Astrocyte of the cerebellum (primary cell): ENCODE measurements at regions of chr1 and their contacts with region 1.

Region 1: GRCh38 chr1:4880601-4881000 is 226.2 kb downstream of the AJAP1 start:
- DNase-seq: no peak
- H3K4me3 ChIP-seq: no peak overlapping the region
- CTCF ChIP-seq: no peak

Region 2: GRCh38 chr1:4836574-4836973 is 44.0 kb before region 1 on chr1:
- in situ Hi-C with region 1: loop called (anchors 5 kb)
- DNase-seq: no peak
- H3K4me3 ChIP-seq: no peak overlapping the region
- CTCF ChIP-seq: no peak

Region 3: DNA sequence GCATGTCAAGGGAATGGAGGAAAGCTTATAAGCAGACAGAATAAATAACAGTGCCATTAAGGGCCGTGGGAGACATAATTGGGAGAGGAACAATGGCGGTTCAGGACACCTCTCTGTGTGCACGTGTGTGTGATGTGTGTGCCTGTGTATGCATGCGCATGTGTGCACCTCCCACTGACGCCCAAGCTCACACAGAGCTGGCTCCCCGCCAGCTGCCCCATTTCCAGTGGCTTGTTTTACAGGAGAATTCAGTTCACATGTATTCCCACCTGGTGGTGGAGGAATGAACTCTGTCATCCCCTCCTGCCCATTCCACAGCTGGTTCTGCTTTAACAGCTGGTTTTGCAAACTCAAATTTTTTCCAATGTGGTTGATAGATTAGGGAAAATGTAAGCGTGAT is 36.0 kb after region 1 on chr1:
- in situ Hi-C with region 1: no loop called
- DNase-seq: no peak
- H3K4me3 ChIP-seq: no peak overlapping the region
- CTCF ChIP-seq: no peak

Region 4: DNA sequence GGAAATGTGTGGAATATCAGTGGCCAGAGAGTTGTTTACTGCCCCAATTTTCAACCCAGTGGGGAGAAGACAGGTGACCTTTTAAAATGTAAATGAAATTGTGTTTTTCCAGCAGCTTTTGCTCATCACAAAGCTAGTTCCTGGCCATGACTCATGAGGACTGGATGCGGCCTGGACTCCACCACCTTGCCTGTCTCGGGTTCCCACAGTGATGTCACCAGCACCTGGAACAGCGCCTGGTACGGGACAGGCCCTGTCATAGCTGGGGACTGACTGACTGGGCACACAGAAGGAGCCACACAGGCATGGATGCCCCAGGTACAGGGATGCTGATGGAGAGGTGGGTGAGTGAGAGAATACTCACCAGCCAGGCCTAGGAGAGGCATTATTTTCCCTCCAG is 50.9 kb after region 1 on chr1:
- in situ Hi-C with region 1: no loop called
- DNase-seq: no peak
- H3K4me3 ChIP-seq: no peak overlapping the region
- CTCF ChIP-seq: no peak